Posterior vena cava (tissue), 2 donors: ENCODE measurements at regions of chr6 and their contacts with region 1.

Region 1: DNA sequence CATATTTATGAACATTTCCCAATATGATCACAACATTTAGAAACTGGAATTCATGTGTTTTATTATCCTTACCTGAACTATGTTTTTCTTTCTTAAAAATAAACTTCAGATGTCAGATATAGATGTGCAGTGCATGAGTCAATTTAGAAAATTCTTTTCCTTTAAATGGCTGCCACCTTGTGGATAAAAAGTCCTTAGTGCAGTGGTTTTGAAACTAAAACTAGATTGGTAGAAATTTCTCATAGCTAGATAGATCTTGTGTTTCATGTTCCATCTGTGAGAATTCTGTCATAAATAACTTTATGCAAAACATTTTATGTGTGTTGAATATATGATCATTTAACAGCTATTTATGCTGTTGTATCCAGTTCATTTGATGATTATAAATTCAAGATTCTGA is 134.9 kb downstream of the KLHL32 start:
- DNase-seq: no peak

Region 2: GRCh38 chr6:96542702-96543101 is 516.8 kb before region 1 on chr6:
- intact Hi-C with region 1: loop called in 1 of 2 experiments (anchors 10 kb)
- DNase-seq: no peak

Region 3: DNA sequence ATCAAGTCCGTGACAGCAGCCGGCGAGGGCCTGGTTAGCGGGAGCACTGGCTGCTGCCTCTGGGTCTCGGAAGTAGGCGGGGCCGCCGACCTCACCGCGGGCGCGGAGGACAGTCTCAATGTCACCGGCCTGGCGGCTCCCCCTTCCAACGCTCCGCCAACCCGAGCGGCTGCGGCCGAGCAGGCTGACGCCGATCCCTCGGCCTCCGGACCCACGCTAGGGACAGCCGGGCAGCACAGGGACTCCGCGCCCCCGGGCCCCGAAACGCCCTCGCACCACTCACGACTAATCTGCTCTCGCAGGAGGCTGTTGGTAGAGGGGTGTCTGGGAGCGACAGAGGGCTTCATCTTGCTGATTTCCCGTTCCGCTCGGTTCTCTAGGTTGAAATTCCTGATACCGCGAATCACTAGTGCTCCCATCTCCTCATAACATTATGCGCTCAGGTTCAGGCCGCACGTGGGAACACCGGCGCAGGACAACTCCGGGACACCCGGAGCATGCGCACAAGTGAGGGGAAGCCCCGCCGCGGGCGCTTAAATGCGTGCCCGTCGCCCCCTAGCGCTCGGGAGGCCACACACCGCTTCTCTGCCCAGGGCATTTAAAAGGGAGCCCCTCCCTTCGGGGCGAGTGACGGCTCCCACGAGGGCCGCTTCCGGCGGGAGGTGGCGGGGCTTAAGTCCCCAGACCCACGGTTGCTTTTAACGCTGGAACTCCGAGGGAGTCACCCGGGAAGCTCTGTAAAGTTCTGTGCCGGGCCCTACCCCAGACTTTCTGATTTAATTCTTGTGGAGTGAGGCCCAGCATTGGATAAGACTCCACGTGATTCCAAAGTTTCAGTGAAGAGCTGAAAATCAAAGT is 161.9 kb before region 1 on chr6 and contains the start of gene NDUFAF4:
- intact Hi-C with region 1: loop called (anchors 5 to 10 kb)
- DNase-seq: peak; percentile 99
- total RNA-seq, gene NDUFAF4: 32.2 to 34.9 TPM

Region 4: DNA sequence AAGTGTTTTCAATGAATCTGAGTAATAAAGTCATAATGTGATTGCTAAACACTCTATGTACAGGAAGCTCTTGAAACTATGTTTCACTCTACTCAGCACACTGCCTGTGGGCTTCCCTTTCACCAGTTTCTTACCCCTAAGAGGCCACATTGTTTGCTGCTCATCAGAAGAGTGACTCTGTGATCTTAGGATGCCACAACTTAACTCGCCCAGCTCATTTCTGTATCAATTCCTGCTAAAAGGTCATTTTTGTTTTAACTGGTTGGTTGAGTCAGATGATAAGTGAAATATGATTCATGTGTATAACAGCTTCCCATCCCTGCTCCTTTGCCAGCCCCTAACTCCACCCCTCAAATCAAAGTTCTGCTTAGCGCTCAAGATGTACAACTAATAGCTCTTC is 152.0 kb before region 1 on chr6:
- intact Hi-C with region 1: loop called (anchors 5 to 10 kb)
- DNase-seq: no peak